Ovary (tissue), 10 donors: ENCODE measurements at regions of chr5 and their contacts with region 1.

Region 1: DNA sequence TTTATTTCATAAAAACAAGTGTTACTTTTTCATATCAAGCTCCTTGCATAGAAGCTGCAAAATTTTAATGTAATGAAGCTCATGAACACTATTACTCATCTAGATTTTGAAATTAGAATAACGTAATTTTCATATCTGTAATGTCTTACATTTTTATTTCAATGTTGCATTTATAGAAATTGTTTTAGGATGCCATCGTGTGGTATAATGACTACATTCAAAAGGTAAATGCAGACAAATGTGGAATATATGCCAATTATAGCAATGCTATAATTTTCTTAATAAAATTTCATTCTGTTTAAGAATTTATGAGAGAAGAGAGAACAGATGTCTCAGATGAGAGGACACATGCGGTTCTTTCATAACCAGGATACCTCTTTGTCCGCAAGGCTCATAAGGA is 230.2 kb downstream of the TMEM232 start:
- DNase-seq: no peak
- H3K4me3 ChIP-seq: no peak overlapping the region
- H3K27ac ChIP-seq: no peak overlapping the region
- H3K4me1 ChIP-seq: no peaks in the 10 kb centered on the region
- H3K27me3 ChIP-seq: no peaks in the 10 kb centered on the region
- CTCF ChIP-seq: no peak
- EP300 ChIP-seq: no peak
- POLR2A ChIP-seq: no peak

Region 2: GRCh38 chr5:110463106-110463505 is 33.2 kb before region 1 on chr5:
- intact Hi-C with region 1: loop called in 1 of 4 experiments (anchors 5 kb)
- DNase-seq: no peak
- H3K4me3 ChIP-seq: no peak overlapping the region
- H3K27ac ChIP-seq: no peak overlapping the region
- H3K4me1 ChIP-seq: no peaks in the 10 kb centered on the region
- H3K27me3 ChIP-seq: no peaks in the 10 kb centered on the region
- CTCF ChIP-seq: no peak
- EP300 ChIP-seq: no peak
- POLR2A ChIP-seq: no peak

Region 3: GRCh38 chr5:110909950-110910349 is 413.7 kb after region 1 on chr5:
- intact Hi-C with region 1: no loop called
- DNase-seq: no peak
- H3K4me3 ChIP-seq: no peak overlapping the region
- H3K27ac ChIP-seq: no peak overlapping the region
- H3K4me1 ChIP-seq: no peaks in the 10 kb centered on the region
- H3K27me3 ChIP-seq: no peaks in the 10 kb centered on the region
- CTCF ChIP-seq: no peak
- EP300 ChIP-seq: no peak
- POLR2A ChIP-seq: no peak